Prostate gland (tissue), 2 donors: ENCODE measurements at regions of chr12 and their contacts with region 1.

Region 1: GRCh38 chr12:75480469-75480949 is at the start of gene GLIPR1:
- DNase-seq: peak; percentile 56
- H3K4me3 ChIP-seq: peak within 1 kb of the TSS; percentile 14 to 21
- H3K27ac ChIP-seq: peak within 1 kb of the TSS; percentile 57 to 67
- H3K4me1 ChIP-seq: no peaks in the 10 kb centered on the region
- H3K27me3 ChIP-seq: no peaks in the 10 kb centered on the region
- CTCF ChIP-seq: no peak
- POLR2A ChIP-seq: peak; percentile 27
- total RNA-seq, gene GLIPR1: 2.7 to 10.0 TPM

Region 2: DNA sequence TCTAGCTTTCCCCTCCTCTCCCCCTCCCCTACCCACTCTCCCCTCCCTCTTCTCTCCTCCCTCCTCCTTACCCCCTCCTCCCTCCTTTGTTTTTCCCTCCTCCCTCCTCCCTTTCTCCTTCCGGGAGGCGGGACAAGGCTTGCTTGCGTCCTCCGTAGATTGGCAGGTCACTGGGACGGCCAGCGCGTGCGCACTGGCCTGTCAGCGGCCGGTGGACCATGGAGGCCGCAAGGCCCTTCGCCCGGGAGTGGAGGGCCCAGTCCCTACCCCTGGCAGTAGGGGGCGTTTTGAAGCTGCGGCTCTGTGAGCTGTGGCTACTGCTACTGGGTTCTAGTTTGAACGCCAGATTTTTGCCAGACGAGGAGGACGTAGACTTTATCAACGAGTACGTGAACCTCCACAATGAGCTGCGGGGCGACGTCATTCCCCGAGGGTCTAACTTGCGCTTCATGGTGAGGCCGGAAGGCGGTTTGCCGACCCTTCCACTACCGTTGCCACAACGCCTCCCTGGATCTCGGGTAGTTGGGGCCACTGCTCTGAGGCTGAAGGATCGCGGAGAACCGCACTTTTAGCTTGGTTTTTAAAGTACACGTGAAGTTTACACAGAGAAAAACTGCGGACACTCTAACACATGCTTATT is 89.5 kb before region 1 on chr12 and contains the start of gene GLIPR1L2:
- intact Hi-C with region 1: loop called (anchors 5 kb)
- DNase-seq: peak; percentile 94
- H3K4me3 ChIP-seq: peak within 1 kb of the TSS; percentile 46 to 52
- H3K27ac ChIP-seq: peak within 1 kb of the TSS; percentile 86 to 91
- H3K4me1 ChIP-seq: no peaks in the 10 kb centered on the region
- H3K27me3 ChIP-seq: no peaks in the 10 kb centered on the region
- CTCF ChIP-seq: peak; percentile 21 to 91 (median 82)
- POLR2A ChIP-seq: peak; percentile 64
- total RNA-seq, gene GLIPR1L2: 1.4 to 1.8 TPM